Common myeloid progenitor, CD34-positive (primary cell): ENCODE measurements at regions of chr7 and their contacts with region 1.

Region 1: DNA sequence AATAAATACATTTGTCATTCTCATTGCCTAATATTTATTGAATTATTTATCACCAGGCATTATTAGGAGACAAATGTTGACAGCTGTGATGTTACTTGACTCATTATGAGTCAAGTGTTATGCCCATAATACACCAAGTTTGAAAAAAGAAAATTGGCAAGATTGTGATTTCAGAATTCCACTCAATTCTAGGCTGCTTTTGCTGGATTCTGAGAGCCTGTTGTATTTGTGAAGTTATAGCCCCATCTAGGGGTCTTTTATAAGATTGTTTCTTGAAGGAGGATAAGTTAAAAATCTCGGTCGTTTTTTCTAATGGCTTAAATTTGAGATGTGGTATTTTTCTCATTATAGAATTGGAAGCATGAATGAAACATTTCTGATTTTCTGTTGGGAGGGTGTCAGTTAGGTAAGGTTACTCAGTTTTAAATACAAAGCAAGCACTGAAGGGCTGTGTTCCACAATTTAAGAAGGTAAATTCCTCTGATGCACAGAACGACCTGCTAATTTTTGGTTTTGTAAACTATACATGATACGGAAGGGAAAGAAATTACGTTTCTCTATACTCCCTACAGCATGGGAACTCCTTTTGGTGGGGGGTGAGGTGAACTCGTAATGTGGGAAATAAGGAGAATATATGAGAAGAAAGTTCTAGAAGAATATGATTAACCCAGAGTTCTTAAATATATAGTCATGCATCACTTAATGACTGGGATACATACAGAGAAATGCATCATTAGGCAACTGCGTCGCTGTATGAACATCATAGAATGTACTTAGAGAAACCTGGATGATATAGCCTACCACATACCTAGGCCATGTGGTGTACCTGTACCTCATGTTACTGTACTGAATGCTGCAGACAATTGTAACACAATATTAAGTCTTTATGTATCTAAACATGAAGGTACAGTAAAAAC is 2.6 kb downstream of the STK31 start:
- DNase-seq: peak; percentile 53 to 73 (median 62)
- H3K4me3 ChIP-seq: no peak overlapping the region
- H3K27ac ChIP-seq: no peak overlapping the region
- H3K4me1 ChIP-seq: no peaks in the 10 kb centered on the region
- H3K27me3 ChIP-seq: no peaks in the 10 kb centered on the region

Region 2: DNA sequence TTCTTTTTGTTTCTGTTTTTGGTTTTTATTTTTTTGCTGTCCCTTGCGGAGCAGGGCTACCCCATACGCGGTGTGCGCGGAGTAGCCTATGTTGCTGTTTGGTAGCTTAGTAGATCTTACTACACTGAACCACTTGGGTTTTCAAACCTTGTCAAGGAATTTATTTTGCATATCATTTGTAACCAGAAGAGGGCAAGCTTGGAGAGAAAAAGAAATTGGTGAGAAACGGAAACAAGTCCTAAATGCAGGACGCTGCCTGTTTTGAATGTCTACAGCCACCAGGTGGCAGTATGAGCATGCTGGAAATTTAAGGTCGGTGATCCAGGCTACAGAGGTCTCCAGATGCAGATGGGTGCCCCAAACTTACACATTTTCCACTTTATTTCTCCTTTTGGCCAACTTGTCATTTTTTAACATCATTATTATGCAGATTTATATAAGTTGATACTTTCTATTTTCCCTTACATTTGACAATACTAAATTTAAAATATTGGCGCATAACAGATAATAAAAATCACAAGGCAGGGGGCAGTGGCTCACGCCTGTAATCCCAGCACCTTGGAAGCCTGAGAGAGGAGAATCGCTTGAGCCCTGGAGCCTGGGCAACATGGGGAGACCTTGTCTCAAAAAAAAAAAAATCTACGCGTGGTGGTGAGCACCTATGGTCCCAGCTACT is 165.6 kb before region 1 on chr7:
- CTCF ChIA-PET with region 1: interaction called, 18 read pairs
- POLR2A ChIA-PET with region 1: no interaction called
- DNase-seq: peak; percentile 93 to 97 (median 95)
- H3K4me3 ChIP-seq: no peak overlapping the region
- H3K27ac ChIP-seq: no peak overlapping the region
- H3K4me1 ChIP-seq: peaks cover 0 to 8% (median 1%) of the 10 kb centered on the region in 4 experiments
- H3K27me3 ChIP-seq: no peaks in the 10 kb centered on the region

Region 3: GRCh38 chr7:23570592-23571200 is 141.9 kb before region 1 on chr7:
- CTCF ChIA-PET with region 1: interaction called, 46 read pairs
- POLR2A ChIA-PET with region 1: no interaction called
- DNase-seq: peak; percentile 58 to 75 (median 61)
- H3K4me3 ChIP-seq: no peak overlapping the region
- H3K27ac ChIP-seq: no peak overlapping the region
- H3K4me1 ChIP-seq: no peaks in the 10 kb centered on the region
- H3K27me3 ChIP-seq: no peaks in the 10 kb centered on the region

Region 4: DNA sequence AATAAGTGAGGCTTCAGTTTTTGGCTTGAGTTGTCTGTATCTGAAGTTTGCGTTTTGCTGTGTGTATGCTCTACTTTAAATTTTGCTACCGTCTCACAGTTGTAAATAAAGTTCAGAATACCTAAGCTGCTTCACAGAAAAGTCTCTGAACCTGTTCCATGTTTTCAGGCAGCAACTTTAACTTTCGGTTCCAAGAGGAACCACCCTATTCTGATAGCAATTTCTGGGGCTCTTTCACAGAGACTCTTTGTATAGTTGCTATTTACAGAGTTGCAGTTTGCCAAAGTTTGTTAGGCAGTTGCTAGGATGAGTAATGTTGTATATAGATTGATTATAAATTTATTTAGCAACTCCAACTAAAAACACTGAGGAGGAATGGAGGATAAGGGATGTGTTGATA is 26.9 kb before region 1 on chr7:
- CTCF ChIA-PET with region 1: interaction called, 14 read pairs
- POLR2A ChIA-PET with region 1: no interaction called
- DNase-seq: peak in 2 of 3 donors; percentile 26 to 33
- H3K4me3 ChIP-seq: no peak overlapping the region
- H3K27ac ChIP-seq: no peak overlapping the region
- H3K4me1 ChIP-seq: peaks cover 0 to 6% (median 3%) of the 10 kb centered on the region in 4 experiments
- H3K27me3 ChIP-seq: no peaks in the 10 kb centered on the region

Region 5: GRCh38 chr7:23696916-23697441 is 15.6 kb before region 1 on chr7:
- CTCF ChIA-PET with region 1: interaction called, 64 read pairs
- POLR2A ChIA-PET with region 1: no interaction called
- DNase-seq: peak; percentile 73 to 90 (median 85)
- H3K4me3 ChIP-seq: peak overlapping the region in 1 of 7 experiments; percentile 17
- H3K27ac ChIP-seq: peak overlapping the region in 1 of 2 experiments; percentile 50
- H3K4me1 ChIP-seq: peaks cover 0 to 25% (median 10%) of the 10 kb centered on the region in 4 experiments
- H3K27me3 ChIP-seq: no peaks in the 10 kb centered on the region